ENCODE measurements at regions of chr2 and their contacts with region 1.

Region 1: GRCh38 chr2:181790716-181791649 is 100.5 kb upstream of the ITPRID2 start:
- DNase-seq: peak; percentile 98
- ATAC-seq: peak; percentile 87
- H3K4me3 ChIP-seq: peak overlapping the region in 1 of 2 experiments; percentile 14; a peak in 2 of 4 replicates
- H3K27ac ChIP-seq: peak overlapping the region; percentile 92
- H3K4me1 ChIP-seq: peaks cover 54 to 72% of the 10 kb centered on the region in 2 experiments
- H3K27me3 ChIP-seq: no peaks in the 10 kb centered on the region
- CTCF ChIP-seq: no peak
- POLR2A ChIP-seq: no peak
- RAD21 ChIP-seq: peak; percentile 45

Region 2: GRCh38 chr2:181780047-181780651 is 10.8 kb before region 1 on chr2:
- CTCF ChIA-PET with region 1: interaction called, 3 read pairs
- POLR2A ChIA-PET with region 1: interaction called, 23 read pairs
- RAD21 ChIA-PET with region 1: no interaction called
- intact Hi-C with region 1: no loop called
- DNase-seq: no peak
- ATAC-seq: no peak
- H3K4me3 ChIP-seq: no peak overlapping the region
- H3K27ac ChIP-seq: peak overlapping the region; percentile 92
- H3K4me1 ChIP-seq: peaks cover 85 to 94% of the 10 kb centered on the region in 2 experiments
- H3K27me3 ChIP-seq: no peaks in the 10 kb centered on the region
- CTCF ChIP-seq: no peak
- POLR2A ChIP-seq: no peak
- RAD21 ChIP-seq: no peak

Region 3: DNA sequence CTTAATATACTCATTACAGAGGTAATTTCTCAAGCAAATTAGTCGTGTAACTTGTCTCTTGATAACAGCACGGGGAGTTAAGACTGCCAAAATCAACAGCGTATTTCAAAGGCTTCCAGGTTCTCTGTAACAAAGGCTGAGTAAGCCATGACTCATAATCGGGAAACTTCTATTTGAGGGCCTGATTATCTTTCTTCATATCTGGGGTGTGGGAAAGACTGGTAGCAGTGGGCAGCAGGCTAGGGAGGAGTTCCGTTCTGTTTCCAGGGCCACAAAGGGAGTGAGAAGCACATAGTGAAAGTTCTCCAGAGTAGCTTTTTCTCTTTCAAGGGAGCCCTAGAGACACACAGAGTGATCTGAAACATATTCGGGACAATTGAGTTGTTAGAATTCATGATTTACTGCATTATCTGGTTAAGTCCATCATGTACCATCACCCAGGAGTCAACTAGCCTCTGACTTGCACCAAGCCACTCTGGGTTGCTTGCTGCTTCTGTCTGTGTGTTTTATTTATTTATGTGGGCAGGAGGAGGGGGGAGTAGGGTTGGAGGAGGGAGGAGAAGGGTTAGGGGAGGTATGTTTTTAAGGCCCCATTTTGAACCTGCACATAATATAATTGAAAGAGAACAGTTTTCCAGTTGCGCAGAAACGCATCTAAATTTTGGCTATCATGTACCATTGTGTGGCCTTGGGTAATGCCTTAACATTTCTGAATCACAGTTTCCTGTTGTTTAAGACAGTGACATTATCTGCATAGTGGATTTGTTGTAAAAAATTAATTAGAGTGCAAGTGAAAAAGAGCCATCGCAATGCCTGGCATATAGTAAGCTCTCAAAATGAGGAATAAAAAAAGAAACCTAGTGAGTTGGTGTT is 20.1 kb after region 1 on chr2:
- CTCF ChIA-PET with region 1: no interaction called
- POLR2A ChIA-PET with region 1: interaction called, 10 read pairs
- RAD21 ChIA-PET with region 1: no interaction called
- intact Hi-C with region 1: loop called (anchors 2 kb)
- DNase-seq: peak; percentile 98
- ATAC-seq: peak; percentile 81
- H3K4me3 ChIP-seq: peak overlapping the region in 1 of 2 experiments; percentile 6; a peak in 1 of 4 replicates
- H3K27ac ChIP-seq: peak overlapping the region; percentile 98
- H3K4me1 ChIP-seq: peaks cover 88 to 96% of the 10 kb centered on the region in 2 experiments
- H3K27me3 ChIP-seq: no peaks in the 10 kb centered on the region
- CTCF ChIP-seq: no peak
- POLR2A ChIP-seq: peak; percentile 61
- RAD21 ChIP-seq: peak; percentile 53

Region 4: DNA sequence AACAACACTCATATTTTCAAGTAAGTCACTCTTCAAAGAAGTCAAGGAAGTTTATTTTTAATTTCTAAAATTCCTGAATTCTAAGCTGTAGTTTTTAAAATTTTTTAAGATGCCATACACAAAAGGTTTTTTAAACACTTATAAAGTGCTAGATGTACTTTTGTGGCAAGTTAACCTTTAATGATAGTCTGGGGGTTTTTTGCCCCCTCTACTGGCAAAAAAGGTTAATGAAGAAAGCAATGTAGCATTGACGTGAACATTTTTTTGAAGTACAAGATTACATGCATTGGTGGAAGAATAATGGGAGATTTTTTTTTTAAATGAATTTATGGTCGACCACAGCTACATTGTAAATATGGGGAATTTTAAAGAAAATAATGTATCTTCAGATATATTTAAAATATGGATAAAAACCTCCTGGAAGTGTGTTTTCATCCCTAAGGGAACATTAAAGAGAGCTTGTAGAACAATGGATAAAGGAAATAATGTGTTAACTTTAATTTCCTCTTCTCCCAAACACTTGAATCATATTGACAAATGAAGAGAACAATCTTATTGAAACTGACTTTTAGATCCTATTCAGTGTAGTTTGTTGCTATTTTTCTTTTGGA is 113.1 kb after region 1 on chr2:
- CTCF ChIA-PET with region 1: interaction called, 4 read pairs
- POLR2A ChIA-PET with region 1: interaction called, 25 read pairs
- RAD21 ChIA-PET with region 1: no interaction called
- intact Hi-C with region 1: no loop called
- DNase-seq: no peak
- ATAC-seq: no peak
- H3K4me3 ChIP-seq: no peak overlapping the region
- H3K27ac ChIP-seq: peak overlapping the region; percentile 99
- H3K4me1 ChIP-seq: peaks cover 71 to 98% of the 10 kb centered on the region in 2 experiments
- H3K27me3 ChIP-seq: no peaks in the 10 kb centered on the region
- CTCF ChIP-seq: peak; percentile 24 to 59 (median 30); a peak in 3 of 6 replicates
- POLR2A ChIP-seq: no peak
- RAD21 ChIP-seq: peak; percentile 48

Measured in HCT116 (cell line).